Naive thymus-derived CD4-positive, alpha-beta T cell (primary cell): ENCODE measurements at regions of chr12 and their contacts with region 1.

Region 1: DNA sequence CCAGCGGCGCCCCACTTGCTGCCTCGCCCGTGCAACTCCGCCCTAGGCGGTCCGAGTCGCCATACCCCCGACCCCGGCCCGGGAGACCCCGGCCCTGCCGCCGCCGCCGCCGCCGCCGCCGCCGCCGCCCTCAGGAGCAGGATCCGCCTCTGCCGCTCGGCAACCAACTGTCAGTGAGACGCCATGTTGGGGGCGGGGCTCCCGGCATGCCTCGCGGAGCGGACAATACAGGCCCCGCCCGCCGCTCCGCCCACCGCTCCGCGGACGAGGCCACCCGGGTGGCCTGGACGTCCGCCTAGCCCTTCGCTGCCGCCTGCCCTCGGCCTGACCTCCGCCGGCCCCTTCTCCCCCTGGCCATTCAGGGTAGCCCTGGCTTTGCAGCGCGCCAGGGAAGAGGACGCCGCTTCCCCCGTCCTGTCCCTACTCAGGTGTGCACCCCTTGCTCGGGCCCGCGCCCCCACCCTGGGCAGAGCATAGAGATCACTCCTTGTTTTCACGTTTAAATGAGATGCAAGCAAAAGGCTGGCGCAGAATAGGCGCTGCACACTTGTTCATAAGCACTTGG is at the start of gene HECTD4:
- DNase-seq: peak; percentile 83 to 97 (median 88)
- ATAC-seq: peak; percentile 100
- H3K4me3 ChIP-seq: peak within 1 kb of the TSS; percentile 81
- H3K4me3 Mint-ChIP-seq: peak within 1 kb of the TSS; percentile 92 to 99 (median 95)
- H3K27ac ChIP-seq: peak within 1 kb of the TSS; percentile 76
- H3K27ac Mint-ChIP-seq: peak within 1 kb of the TSS; percentile 81 to 96 (median 91)
- H3K4me1 ChIP-seq: peaks cover 6 to 15% of the 10 kb centered on the region in 2 donors
- H3K4me1 Mint-ChIP-seq: peaks cover 11 to 32% (median 28%) of the 10 kb centered on the region in 7 donors
- H3K27me3 ChIP-seq: no peaks in the 10 kb centered on the region
- H3K27me3 Mint-ChIP-seq: peaks cover 0 to 2% (median under 1%) of the 10 kb centered on the region in 5 donors
- total RNA-seq, gene HECTD4: 44.9 to 57.7 (median 51.4) TPM

Region 2: DNA sequence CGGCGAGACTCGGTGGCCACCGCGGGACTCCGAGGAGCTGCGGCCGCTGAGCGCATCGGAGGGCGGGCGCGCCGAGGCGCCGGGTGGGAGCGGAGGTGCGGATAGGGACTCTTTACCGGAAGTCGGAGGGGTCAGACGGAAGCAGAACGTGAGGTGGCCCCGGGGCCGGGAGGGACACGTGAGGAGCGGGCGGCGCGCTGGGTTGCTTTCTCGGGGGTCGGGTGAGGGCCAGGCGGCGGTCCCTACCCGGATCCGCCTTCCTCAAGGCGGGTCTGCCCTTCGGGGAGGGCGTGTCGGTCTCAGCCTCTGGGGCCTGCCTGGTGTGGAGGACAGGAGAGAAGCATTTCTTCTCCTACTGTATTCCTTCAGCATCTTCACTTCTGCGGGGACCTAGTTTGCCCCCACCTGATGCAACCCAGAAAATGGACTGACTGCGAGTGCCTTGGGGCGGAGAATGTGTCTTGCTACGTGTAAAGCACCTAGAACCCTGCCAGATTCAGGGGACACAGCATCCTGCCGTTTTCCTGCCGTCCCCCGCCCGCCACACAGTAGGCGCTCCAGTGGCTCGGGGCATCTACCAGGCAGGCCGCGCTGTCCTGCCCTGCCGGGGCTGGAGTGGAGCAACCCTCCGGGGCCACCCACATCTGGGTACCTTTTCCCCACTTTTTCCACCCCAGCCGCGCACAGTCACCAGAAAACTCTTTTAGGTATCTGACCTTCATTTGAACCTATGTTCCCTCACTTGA is 782.7 kb before region 1 on chr12:
- CTCF ChIA-PET with region 1: no interaction called
- POLR2A ChIA-PET with region 1: no interaction called
- intact Hi-C with region 1: loop called (anchors 10 kb)
- DNase-seq: peak; percentile 82 to 94 (median 87)
- ATAC-seq: peak; percentile 89
- H3K4me3 ChIP-seq: peak overlapping the region; percentile 80
- H3K4me3 Mint-ChIP-seq: peak overlapping the region; percentile 74 to 93 (median 86)
- H3K27ac ChIP-seq: peak overlapping the region; percentile 80
- H3K27ac Mint-ChIP-seq: peak overlapping the region; percentile 83 to 93 (median 89)
- H3K4me1 ChIP-seq: peaks cover 3 to 5% of the 10 kb centered on the region in 2 donors
- H3K4me1 Mint-ChIP-seq: peaks cover 22 to 39% (median 26%) of the 10 kb centered on the region in 7 donors
- H3K27me3 ChIP-seq: no peaks in the 10 kb centered on the region
- H3K27me3 Mint-ChIP-seq: no peaks in the 10 kb centered on the region

Region 3: GRCh38 chr12:111841750-111842555 is 540.4 kb before region 1 on chr12 and contains the start of gene MAPKAPK5:
- CTCF ChIA-PET with region 1: no interaction called
- POLR2A ChIA-PET with region 1: no interaction called
- intact Hi-C with region 1: loop called (anchors 1 kb)
- DNase-seq: peak; percentile 95 to 99 (median 98)
- ATAC-seq: peak; percentile 93
- H3K4me3 ChIP-seq: peak within 1 kb of the TSS; percentile 99
- H3K4me3 Mint-ChIP-seq: peak within 1 kb of the TSS; percentile 90 to 99 (median 98)
- H3K27ac ChIP-seq: peak within 1 kb of the TSS; percentile 89
- H3K27ac Mint-ChIP-seq: peak within 1 kb of the TSS; percentile 91 to 100 (median 98)
- H3K4me1 ChIP-seq: peaks cover 28 to 32% of the 10 kb centered on the region in 2 donors
- H3K4me1 Mint-ChIP-seq: peaks cover 40 to 82% (median 69%) of the 10 kb centered on the region in 7 donors
- H3K27me3 ChIP-seq: no peaks in the 10 kb centered on the region
- H3K27me3 Mint-ChIP-seq: peaks cover 0 to 2% (median 0%) of the 10 kb centered on the region in 5 donors
- total RNA-seq, gene MAPKAPK5: 46.1 to 72.1 (median 60.0) TPM

Region 4: GRCh38 chr12:112125250-112125999 is 256.9 kb before region 1 on chr12 and contains the start of gene TRAFD1:
- CTCF ChIA-PET with region 1: no interaction called
- POLR2A ChIA-PET with region 1: no interaction called
- intact Hi-C with region 1: loop called in 1 of 2 experiments (anchors 1 kb)
- DNase-seq: peak; percentile 96 to 99 (median 98)
- ATAC-seq: peak; percentile 100
- H3K4me3 ChIP-seq: peak within 1 kb of the TSS; percentile 97
- H3K4me3 Mint-ChIP-seq: peak within 1 kb of the TSS; percentile 74 to 91 (median 88)
- H3K27ac ChIP-seq: peak within 1 kb of the TSS; percentile 93
- H3K27ac Mint-ChIP-seq: peak within 1 kb of the TSS; percentile 77 to 95 (median 88)
- H3K4me1 ChIP-seq: peaks cover 26 to 38% of the 10 kb centered on the region in 2 donors
- H3K4me1 Mint-ChIP-seq: peaks cover 21 to 49% (median 39%) of the 10 kb centered on the region in 7 donors
- H3K27me3 ChIP-seq: no peaks in the 10 kb centered on the region
- H3K27me3 Mint-ChIP-seq: peaks cover 0 to 10% (median 0%) of the 10 kb centered on the region in 5 donors
- total RNA-seq, gene TRAFD1: 22.1 to 86.6 (median 42.7) TPM

Region 5: GRCh38 chr12:112294793-112295192 is 87.5 kb before region 1 on chr12:
- CTCF ChIA-PET with region 1: interaction called, 3 read pairs
- POLR2A ChIA-PET with region 1: no interaction called
- intact Hi-C with region 1: loop called in 1 of 2 experiments (anchors 1 kb)
- DNase-seq: no peak
- ATAC-seq: no peak
- H3K4me3 ChIP-seq: no peak overlapping the region
- H3K4me3 Mint-ChIP-seq: no peak overlapping the region
- H3K27ac ChIP-seq: no peak overlapping the region
- H3K27ac Mint-ChIP-seq: peak overlapping the region in 1 of 9 donors; percentile 37
- H3K4me1 ChIP-seq: no peaks in the 10 kb centered on the region
- H3K4me1 Mint-ChIP-seq: peaks cover 3 to 8% (median 6%) of the 10 kb centered on the region in 7 donors
- H3K27me3 ChIP-seq: no peaks in the 10 kb centered on the region
- H3K27me3 Mint-ChIP-seq: no peaks in the 10 kb centered on the region

Region 6: GRCh38 chr12:112418608-112419298 is 36.4 kb after region 1 on chr12 and contains the start of gene PTPN11:
- CTCF ChIA-PET with region 1: no interaction called
- POLR2A ChIA-PET with region 1: interaction called, 3 read pairs
- intact Hi-C with region 1: loop called (anchors 1 to 2 kb)
- DNase-seq: peak; percentile 84 to 96 (median 92)
- ATAC-seq: peak; percentile 95
- H3K4me3 ChIP-seq: peak within 1 kb of the TSS; percentile 100
- H3K4me3 Mint-ChIP-seq: peak within 1 kb of the TSS; percentile 91 to 100 (median 96)
- H3K27ac ChIP-seq: peak within 1 kb of the TSS; percentile 91
- H3K27ac Mint-ChIP-seq: peak within 1 kb of the TSS; percentile 95 to 100 (median 98)
- H3K4me1 ChIP-seq: peaks cover 24 to 28% of the 10 kb centered on the region in 2 donors
- H3K4me1 Mint-ChIP-seq: peaks cover 18 to 45% (median 40%) of the 10 kb centered on the region in 7 donors
- H3K27me3 ChIP-seq: no peaks in the 10 kb centered on the region
- H3K27me3 Mint-ChIP-seq: no peaks in the 10 kb centered on the region
- total RNA-seq, gene PTPN11: 43.5 to 94.7 (median 46.7) TPM